IMR-90 (cell line): ENCODE measurements at regions of chr5 and their contacts with region 1.

Region 1: GRCh38 chr5:107558823-107559375 is 111.8 kb downstream of the EFNA5 start:
- DNase-seq: no peak
- ATAC-seq: no peak
- H3K4me3 ChIP-seq: no peak overlapping the region
- H3K27ac ChIP-seq: no peak overlapping the region
- H3K4me1 ChIP-seq: peaks cover 10% of the 10 kb centered on the region
- H3K27me3 ChIP-seq: no peaks in the 10 kb centered on the region
- CTCF ChIP-seq: no peak
- POLR2A ChIP-seq: no peak
- RAD21 ChIP-seq: no peak

Region 2: GRCh38 chr5:107408564-107408963 is 150.3 kb before region 1 on chr5:
- CTCF ChIA-PET with region 1: no interaction called
- POLR2A ChIA-PET with region 1: interaction called, 19 read pairs
- dilution Hi-C with region 1: no loop called
- in situ Hi-C with region 1: no loop called
- intact Hi-C with region 1: no loop called
- DNase-seq: no peak
- ATAC-seq: no peak
- H3K4me3 ChIP-seq: no peak overlapping the region
- H3K27ac ChIP-seq: no peak overlapping the region
- H3K4me1 ChIP-seq: no peaks in the 10 kb centered on the region; the same call in 1 of the 2 replicates
- H3K27me3 ChIP-seq: no peaks in the 10 kb centered on the region
- CTCF ChIP-seq: no peak
- POLR2A ChIP-seq: no peak
- RAD21 ChIP-seq: no peak